Breast epithelium (tissue), 4 donors: ENCODE measurements at regions of chr7 and their contacts with region 1.

Region 1: GRCh38 chr7:25552998-25553397 is 324.7 kb upstream of the NPVF start:
- DNase-seq: no peak
- H3K4me3 ChIP-seq: no peak overlapping the region
- H3K27ac ChIP-seq: no peak overlapping the region
- H3K4me1 ChIP-seq: no peaks in the 10 kb centered on the region
- H3K27me3 ChIP-seq: no peaks in the 10 kb centered on the region
- CTCF ChIP-seq: no peak
- POLR2A ChIP-seq: no peak

Region 2: DNA sequence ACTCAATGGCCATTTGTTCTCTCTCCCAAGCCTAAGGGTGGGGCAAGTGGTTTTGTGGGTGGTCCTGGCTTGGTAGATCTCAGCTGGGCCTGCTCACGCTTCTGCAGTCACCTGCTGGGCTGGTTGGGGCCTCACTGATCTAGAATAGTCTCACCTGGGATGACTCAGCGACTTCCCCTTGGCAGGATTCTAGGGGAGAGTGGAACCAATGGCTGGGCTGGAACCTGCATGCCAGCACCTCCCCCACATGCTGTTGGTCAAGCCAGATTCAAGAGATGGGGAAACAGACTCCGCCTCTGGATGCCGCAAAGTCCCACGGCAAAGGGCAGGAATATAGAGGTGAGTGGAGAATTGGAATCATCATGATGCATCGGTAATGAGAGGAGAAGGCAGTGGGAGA is 31.8 kb before region 1 on chr7:
- intact Hi-C with region 1: loop called (anchors 1 kb)
- DNase-seq: no peak
- H3K4me3 ChIP-seq: no peak overlapping the region
- H3K27ac ChIP-seq: no peak overlapping the region
- H3K4me1 ChIP-seq: no peaks in the 10 kb centered on the region
- H3K27me3 ChIP-seq: no peaks in the 10 kb centered on the region
- CTCF ChIP-seq: no peak
- POLR2A ChIP-seq: no peak

Region 3: GRCh38 chr7:25615003-25615402 is 62.0 kb after region 1 on chr7:
- intact Hi-C with region 1: no loop called
- DNase-seq: no peak
- H3K4me3 ChIP-seq: no peak overlapping the region
- H3K27ac ChIP-seq: no peak overlapping the region
- H3K4me1 ChIP-seq: no peaks in the 10 kb centered on the region
- H3K27me3 ChIP-seq: no peaks in the 10 kb centered on the region
- CTCF ChIP-seq: no peak
- POLR2A ChIP-seq: no peak